ENCODE measurements at regions of chr7 and their contacts with region 1.

Region 1: DNA sequence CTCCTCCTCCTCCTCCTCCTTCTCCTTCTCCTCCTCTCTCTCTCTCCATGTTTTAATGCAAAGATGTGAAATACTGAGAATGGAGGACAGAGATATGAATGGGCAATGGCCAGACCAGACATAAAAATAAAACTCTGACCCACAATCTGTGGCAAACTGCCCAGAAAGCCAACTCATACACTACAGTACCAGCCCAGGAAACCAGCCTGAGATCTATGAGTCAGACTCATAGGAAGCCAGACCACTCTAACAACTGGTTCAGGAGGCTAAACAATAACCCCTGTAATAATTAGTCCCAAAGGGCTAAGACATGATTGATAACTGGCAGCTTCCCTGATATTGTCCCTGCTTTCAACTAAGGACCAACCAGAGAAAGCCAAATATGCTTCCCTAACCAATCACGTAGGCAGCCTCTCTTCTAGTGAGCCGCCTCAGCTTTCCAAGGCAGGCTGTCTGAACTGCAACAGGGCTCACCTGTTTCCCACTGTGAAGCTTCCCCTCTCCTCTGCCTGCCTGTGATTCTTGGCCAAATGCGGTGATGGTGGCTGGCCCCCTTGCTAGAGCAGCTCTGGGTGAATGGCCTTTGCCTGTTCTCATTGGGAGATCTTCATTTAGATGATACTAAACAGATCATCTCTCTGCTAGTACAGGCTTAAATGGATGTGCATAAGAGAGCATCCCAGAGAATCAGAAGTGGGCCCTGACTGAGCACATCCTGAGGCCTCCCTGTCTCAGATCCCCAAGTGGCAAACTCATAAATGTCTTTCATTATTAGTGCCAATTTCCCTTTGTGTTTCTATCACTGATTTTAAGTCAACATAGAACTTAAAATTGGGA is 817.6 kb downstream of the TNS3 start:
- DNase-seq: no peak

Region 2: GRCh38 chr7:46558482-46559193 is 205.7 kb before region 1 on chr7:
- intact Hi-C with region 1: no loop called
- DNase-seq: no peak

Region 3: GRCh38 chr7:46835556-46835955 is 71.2 kb after region 1 on chr7:
- intact Hi-C with region 1: no loop called
- DNase-seq: no peak

Region 4: DNA sequence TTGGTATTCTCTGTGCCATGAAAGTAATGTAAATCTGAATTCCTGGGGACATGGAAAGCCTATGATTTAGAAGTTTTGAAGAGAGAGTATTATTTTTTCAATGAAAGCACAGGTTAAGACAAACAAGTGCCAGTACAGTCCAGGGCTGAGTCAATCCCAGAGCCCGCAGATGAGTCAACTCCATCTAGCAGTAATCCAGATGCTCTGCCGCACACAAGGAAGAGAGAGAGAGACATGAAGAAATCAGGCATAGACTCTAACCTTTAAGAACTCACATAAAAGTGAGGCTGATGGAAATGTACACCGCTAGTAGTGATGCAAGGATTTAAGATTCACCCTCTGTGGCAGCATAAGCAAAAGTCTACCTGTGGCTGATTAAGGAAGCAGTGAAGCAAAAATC is 166.0 kb after region 1 on chr7:
- intact Hi-C with region 1: no loop called
- DNase-seq: no peak

Region 5: GRCh38 chr7:47254081-47255006 is 490.0 kb after region 1 on chr7:
- intact Hi-C with region 1: loop called (anchors 10 kb)
- DNase-seq: peak; percentile 89

Measured in cardiac septum (tissue), 1 donor.